ENCODE measurements at regions of chr17 and their contacts with region 1.

Region 1: GRCh38 chr17:57130761-57131461 is 45.9 kb downstream of the AKAP1 start:
- DNase-seq: peak; percentile 89
- H3K4me3 Mint-ChIP-seq: no peak overlapping the region
- H3K27ac Mint-ChIP-seq: no peak overlapping the region
- H3K4me1 Mint-ChIP-seq: peaks cover 15% of the 10 kb centered on the region
- H3K27me3 Mint-ChIP-seq: peaks cover 2% of the 10 kb centered on the region

Region 2: GRCh38 chr17:57739402-57740392 is 608.8 kb after region 1 on chr17:
- CTCF ChIA-PET with region 1: interaction called, 24 read pairs
- DNase-seq: no peak
- H3K4me3 Mint-ChIP-seq: no peak overlapping the region
- H3K27ac Mint-ChIP-seq: no peak overlapping the region
- H3K4me1 Mint-ChIP-seq: peaks cover 5% of the 10 kb centered on the region
- H3K27me3 Mint-ChIP-seq: peaks cover 54% of the 10 kb centered on the region

Region 3: DNA sequence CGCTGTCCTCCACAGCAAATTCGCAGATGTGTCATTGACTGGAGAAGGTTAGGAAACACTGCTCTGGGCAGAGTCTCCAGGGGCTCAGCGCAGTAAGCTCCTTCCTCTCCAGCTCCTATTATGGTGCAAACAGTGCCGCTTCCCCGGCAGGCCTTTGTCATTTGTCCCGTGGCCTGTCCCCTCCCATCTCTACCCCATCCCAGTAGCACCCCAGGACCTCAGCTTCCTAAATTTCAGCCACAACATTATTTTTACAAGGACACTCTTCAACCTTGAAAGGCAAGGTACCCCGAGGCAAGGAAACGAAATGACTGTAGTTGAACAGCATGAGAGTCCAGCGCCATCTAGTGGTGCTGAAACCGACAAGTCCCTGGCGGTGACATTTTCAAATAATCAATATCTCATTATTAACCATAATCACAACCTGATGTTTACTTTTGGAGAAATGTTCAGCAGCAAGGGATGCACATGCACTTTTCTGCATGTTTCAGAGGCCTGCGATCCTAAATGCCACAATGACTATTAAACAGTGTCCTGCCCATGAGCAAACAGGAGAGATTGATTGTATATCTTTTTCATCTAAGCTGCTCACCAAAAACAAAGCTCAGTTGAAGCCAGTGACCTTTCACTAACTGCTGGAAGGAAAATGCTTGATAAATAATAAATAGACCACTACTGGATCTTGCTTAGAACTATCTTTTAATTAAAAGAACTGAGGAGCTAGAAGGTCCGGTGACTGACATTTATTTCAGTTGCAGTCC is 702.4 kb after region 1 on chr17:
- CTCF ChIA-PET with region 1: interaction called, 11 read pairs
- DNase-seq: peak; percentile 79
- H3K4me3 Mint-ChIP-seq: no peak overlapping the region
- H3K27ac Mint-ChIP-seq: no peak overlapping the region
- H3K4me1 Mint-ChIP-seq: peaks cover 2% of the 10 kb centered on the region
- H3K27me3 Mint-ChIP-seq: peaks cover 6% of the 10 kb centered on the region

Measured in activated naive CD4-positive, alpha-beta T cell treated with anti-CD3 and anti-CD28 coated beads, Interleukin-2, amount 10 ng/mL, durations not matched to agents 7 days and 5 days (primary cell).